Activated naive CD8-positive, alpha-beta T cell treated with anti-CD3 and anti-CD28 coated beads, Interleukin-2, amount 10 ng/mL, durations not matched to agents 7 days and 5 days (primary cell): ENCODE measurements at regions of chr10 and their contacts with region 1.

Region 1: DNA sequence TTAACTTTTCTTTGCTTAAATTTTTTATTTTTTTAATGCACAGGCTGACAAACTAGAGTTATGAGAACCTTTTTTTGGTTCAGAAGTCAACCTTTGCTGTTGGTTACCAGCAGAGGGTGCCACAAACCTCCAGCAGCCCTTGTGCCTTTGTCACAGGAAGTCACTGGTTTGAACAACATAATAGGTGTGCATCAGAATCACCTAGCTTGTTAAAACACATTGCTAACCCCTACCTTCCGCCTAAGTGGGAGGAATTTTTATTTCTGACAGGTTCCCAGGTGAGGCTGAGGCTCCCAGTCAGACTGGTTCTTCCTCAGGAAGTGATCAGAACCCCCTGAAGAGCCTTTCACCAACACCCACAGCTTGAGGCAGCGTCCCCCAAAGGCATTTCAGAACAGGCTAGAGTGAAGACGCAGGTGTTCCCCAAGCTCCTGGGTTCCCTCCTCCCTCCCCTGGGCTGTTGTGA is 22.6 kb upstream of the VDAC2 start:
- DNase-seq: peak; percentile 54
- ATAC-seq: peak; percentile 96
- H3K4me3 Mint-ChIP-seq: peak overlapping the region; percentile 48
- H3K27ac Mint-ChIP-seq: peak overlapping the region; percentile 88
- H3K4me1 Mint-ChIP-seq: peaks cover 16% of the 10 kb centered on the region
- H3K27me3 Mint-ChIP-seq: no peaks in the 10 kb centered on the region

Region 2: DNA sequence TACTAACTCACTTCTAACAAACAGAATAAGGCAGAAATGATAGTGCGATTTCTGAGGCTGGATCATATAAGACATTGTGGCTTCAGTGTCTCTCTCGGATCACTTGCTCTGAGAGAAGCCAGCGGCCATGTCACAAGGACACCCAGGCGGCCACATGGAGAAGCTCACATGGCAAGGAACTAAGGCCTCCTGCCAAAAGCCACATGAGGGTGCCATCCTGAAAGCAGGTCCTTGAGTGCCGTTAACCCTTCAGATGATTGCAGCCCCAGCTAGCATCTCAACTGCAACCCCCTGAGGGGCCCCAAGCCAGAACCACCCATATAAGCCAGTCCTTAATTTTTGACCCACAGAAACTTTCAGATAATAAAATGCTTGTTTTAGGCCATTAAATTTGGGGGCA is 15.7 kb after region 1 on chr10:
- POLR2A ChIA-PET with region 1: no interaction called
- DNase-seq: no peak
- ATAC-seq: no peak
- H3K4me3 Mint-ChIP-seq: no peak overlapping the region
- H3K27ac Mint-ChIP-seq: no peak overlapping the region
- H3K4me1 Mint-ChIP-seq: peaks cover 16% of the 10 kb centered on the region
- H3K27me3 Mint-ChIP-seq: no peaks in the 10 kb centered on the region

Region 3: GRCh38 chr10:75235375-75236177 is 47.6 kb after region 1 on chr10 and contains the start of gene COMTD1:
- POLR2A ChIA-PET with region 1: interaction called, 25 read pairs
- DNase-seq: peak; percentile 99
- ATAC-seq: peak; percentile 71
- H3K4me3 Mint-ChIP-seq: peak within 1 kb of the TSS; percentile 87
- H3K27ac Mint-ChIP-seq: peak within 1 kb of the TSS; percentile 94
- H3K4me1 Mint-ChIP-seq: peaks cover 20% of the 10 kb centered on the region
- H3K27me3 Mint-ChIP-seq: no peaks in the 10 kb centered on the region
- total RNA-seq, gene COMTD1: 40.8 to 42.3 TPM